Activated naive CD4-positive, alpha-beta T cell treated with anti-CD3 and anti-CD28 coated beads, Interleukin-2, amount 10 ng/mL, durations not matched to agents 7 days and 5 days (primary cell): ENCODE measurements at regions of chr2 and their contacts with region 1.

Region 1: DNA sequence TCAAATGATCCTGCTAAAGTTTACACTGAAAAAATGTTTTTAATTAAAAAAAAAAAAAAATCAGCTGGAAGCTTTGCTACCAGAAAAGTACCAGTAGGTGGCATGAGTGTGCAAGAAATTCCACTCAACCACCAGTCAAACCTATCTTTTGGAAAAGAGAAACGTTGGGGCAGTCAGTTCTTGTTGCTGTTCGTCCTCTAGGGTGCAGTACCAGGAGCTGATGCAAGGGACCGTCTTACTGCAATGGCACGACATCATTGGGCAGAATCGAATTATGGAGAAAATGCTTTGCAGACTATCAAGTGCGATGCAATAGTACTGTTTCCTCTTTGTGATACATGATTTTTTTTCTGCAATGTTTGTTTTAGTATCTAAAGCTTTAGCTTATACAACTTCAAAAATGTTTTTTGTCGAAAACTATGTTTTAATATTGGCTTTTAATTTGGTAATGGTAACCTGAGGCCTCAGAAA is 18.3 kb downstream of the YPEL5 start:
- DNase-seq: peak; percentile 81
- H3K4me3 Mint-ChIP-seq: no peak overlapping the region
- H3K27ac Mint-ChIP-seq: no peak overlapping the region
- H3K4me1 Mint-ChIP-seq: no peaks in the 10 kb centered on the region
- H3K27me3 Mint-ChIP-seq: peaks cover 4% of the 10 kb centered on the region

Region 2: DNA sequence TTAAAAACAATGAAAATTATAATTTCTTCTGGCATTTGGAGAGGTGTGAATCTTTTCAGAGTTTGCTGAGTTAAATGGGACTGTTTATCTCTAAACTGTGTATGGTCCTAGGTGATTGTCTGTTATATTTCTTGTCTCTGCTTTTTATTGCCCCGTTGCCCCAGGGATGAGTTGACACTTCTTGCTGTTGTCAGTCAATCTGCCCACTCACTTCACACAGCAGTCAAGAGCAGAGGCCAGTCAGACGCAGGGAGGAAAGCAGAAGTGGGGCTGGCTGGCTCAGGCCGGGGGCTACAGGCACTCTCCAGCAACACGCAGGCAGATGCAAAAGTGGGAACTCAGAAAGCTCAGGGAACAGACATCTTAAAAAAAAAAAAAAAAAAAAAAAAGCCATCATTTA is 684.7 kb before region 1 on chr2:
- CTCF ChIA-PET with region 1: no interaction called
- DNase-seq: no peak
- H3K4me3 Mint-ChIP-seq: no peak overlapping the region
- H3K27ac Mint-ChIP-seq: no peak overlapping the region
- H3K4me1 Mint-ChIP-seq: no peaks in the 10 kb centered on the region
- H3K27me3 Mint-ChIP-seq: peaks cover 24% of the 10 kb centered on the region

Region 3: DNA sequence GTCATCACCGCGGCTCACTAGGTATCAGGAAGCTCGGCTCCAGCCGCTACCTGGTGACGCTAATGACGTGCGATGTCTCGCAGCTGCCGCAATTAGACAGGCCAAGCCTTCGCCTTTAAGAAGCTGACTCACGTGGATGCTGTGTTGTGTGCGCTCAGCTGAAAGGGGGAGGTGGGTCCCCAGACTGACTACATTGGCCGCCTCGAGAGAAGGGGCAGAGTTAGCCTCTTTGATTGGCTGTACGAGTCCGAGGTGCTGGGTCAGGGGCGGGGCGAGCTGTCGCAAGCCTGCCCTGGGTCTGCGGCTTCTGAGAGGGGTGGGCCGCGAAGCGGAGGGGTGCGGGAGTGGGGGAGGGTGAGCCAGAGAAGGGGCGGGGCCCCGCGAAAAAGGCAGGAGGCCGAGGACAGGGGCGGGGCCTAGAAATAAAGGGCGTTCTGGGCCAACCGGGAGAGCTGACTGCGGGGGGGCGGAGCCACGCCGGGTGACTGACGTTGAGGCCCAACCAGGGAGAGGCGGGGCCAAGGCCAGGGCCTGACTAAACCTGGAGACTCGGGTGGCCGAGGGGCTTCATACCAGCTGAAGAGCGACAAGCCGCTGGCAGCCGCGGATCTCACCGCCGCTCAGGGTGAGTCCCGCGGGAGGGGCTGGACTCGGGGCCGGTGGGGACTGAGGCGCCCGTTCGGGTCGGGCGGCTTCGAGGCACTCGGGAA is 18.5 kb before region 1 on chr2 and contains the start of gene YPEL5:
- CTCF ChIA-PET with region 1: interaction called, 79 read pairs
- DNase-seq: peak; percentile 99
- H3K4me3 Mint-ChIP-seq: peak within 1 kb of the TSS; percentile 84
- H3K27ac Mint-ChIP-seq: peak within 1 kb of the TSS; percentile 99
- H3K4me1 Mint-ChIP-seq: peaks cover 42% of the 10 kb centered on the region
- H3K27me3 Mint-ChIP-seq: no peaks in the 10 kb centered on the region

Region 4: GRCh38 chr2:30201990-30202389 is 36.9 kb after region 1 on chr2:
- CTCF ChIA-PET with region 1: interaction called, 51 read pairs
- DNase-seq: no peak
- H3K4me3 Mint-ChIP-seq: no peak overlapping the region
- H3K27ac Mint-ChIP-seq: no peak overlapping the region
- H3K4me1 Mint-ChIP-seq: no peaks in the 10 kb centered on the region
- H3K27me3 Mint-ChIP-seq: peaks cover 32% of the 10 kb centered on the region

Region 5: DNA sequence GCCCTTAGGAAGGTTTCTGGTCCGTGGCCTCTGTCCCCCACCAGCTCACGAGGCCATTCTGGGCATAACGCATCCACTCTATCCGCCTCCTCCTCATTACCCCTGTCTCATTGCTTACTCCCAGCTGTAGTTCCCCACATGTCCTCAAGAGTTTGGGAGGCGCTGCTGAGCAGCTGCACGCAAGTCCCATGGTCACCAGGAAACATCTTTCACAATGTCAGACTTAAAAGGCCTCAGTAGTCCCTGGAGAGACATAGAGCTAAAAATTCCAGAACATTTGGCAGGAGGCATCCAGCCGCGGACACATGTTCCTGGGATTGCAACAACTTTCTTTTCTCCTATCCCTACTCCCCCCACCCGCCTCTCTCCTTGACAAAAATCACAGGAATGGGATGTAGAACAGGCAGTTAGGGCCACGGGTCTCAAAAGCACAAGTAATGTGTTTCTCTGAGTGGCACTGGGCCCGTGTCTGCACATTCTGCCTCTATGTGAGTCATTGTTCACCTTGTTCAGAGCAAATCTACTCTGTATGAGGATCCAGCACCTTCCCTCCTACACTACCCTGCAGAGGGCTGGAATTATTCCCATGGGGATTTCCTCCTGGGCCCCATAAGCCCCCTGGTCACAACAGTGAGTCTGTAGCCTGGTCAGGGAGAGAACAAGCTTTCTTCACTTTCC is 74.4 kb after region 1 on chr2:
- CTCF ChIA-PET with region 1: interaction called, 11 read pairs
- DNase-seq: peak; percentile 77
- H3K4me3 Mint-ChIP-seq: peak overlapping the region; percentile 2
- H3K27ac Mint-ChIP-seq: peak overlapping the region; percentile 67
- H3K4me1 Mint-ChIP-seq: peaks cover 89% of the 10 kb centered on the region
- H3K27me3 Mint-ChIP-seq: no peaks in the 10 kb centered on the region

Region 6: GRCh38 chr2:30475542-30475941 is 310.5 kb after region 1 on chr2:
- CTCF ChIA-PET with region 1: interaction called, 17 read pairs
- DNase-seq: no peak
- H3K4me3 Mint-ChIP-seq: no peak overlapping the region
- H3K27ac Mint-ChIP-seq: no peak overlapping the region
- H3K4me1 Mint-ChIP-seq: peaks cover 3% of the 10 kb centered on the region
- H3K27me3 Mint-ChIP-seq: no peaks in the 10 kb centered on the region